Ascending aorta (tissue), 2 donors: ENCODE measurements at regions of chr9 and their contacts with region 1.

Region 1: DNA sequence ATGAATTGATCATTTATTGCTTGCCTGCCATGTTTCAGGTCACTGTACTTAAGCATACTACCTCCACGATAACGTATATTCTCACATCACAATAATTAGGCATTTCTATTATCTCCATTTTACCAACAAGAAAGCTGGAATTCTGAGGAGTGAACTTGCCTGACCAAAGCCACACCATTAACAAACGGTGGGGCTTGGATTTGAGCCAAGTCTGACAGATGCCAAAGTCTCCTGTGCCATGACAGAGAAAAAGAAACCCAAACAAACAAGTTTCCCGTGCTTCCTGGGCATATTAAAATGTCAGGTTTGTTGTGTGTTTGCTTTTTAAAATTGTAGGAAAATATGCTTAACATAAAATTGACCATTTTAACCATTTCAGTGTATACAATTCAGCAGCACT is 40.8 kb upstream of the KCNV2 start:
- DNase-seq: no peak
- H3K4me3 ChIP-seq: no peak overlapping the region
- H3K27ac ChIP-seq: no peak overlapping the region
- H3K4me1 ChIP-seq: no peaks in the 10 kb centered on the region
- H3K27me3 ChIP-seq: no peaks in the 10 kb centered on the region
- CTCF ChIP-seq: no peak

Region 2: DNA sequence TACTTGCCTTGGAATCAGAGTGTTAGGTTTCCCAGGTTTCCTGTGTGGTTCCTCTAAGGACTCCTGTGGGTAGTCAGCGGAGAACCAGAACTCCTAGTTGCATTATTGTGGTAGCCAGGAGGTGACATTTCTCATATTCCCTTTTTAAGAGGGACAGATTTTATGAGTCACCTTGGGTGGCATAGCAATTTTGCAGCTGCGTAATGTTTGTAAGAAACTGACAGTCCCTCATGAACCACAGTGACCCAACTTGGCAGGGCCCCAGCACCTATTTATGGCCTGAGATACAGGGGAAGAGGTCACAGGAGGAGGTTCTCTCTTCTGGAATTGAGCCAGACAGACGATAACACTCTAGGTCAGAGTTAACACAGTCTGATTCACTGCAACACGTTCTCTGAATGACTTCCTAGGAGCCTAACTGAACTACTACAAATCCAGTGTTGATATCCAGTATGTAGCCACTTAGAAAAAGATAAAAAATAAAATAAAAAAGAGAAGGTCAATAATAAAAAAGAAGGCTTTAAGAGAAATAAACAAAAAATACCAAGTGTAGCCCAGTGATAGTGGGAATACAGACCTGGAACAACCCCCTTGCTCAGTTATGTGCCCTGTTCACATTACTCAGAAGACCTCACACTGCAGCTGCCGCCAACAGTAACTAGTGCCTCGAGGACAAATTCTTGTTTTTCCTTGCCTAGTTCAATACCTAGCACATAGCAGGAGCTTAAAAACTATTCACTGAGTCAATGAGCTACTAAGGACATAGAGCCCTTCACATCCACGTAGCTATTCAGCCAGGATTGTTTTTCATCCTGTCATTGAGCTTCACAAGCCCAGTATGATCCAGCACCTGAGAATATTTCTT is 105.6 kb before region 1 on chr9:
- intact Hi-C with region 1: no loop called
- DNase-seq: peak; percentile 37 to 89
- H3K4me3 ChIP-seq: no peak overlapping the region
- H3K27ac ChIP-seq: peak overlapping the region; percentile 36 to 51
- H3K4me1 ChIP-seq: peaks cover 0 to 7% of the 10 kb centered on the region in 2 donors
- H3K27me3 ChIP-seq: no peaks in the 10 kb centered on the region
- CTCF ChIP-seq: no peak

Region 3: DNA sequence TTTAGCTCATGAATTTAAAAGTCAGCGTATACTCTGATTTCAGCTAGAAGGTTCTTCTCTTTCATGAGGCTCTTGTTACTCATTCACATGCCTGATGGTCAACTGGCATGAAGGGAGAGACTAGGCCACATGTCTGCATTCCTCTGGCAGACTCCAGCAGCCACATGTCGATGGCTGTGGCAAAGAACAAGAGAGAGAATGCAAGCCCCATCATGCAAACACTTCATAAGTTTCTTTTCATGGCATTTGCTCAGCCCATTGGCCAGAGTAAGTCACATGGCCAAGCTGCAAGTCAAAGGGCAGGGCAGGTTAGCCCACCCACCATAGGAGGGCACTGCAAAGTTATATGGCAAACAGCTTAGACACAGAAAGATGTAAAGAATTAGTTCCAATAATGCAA is 46.2 kb after region 1 on chr9:
- intact Hi-C with region 1: loop called (anchors 5 kb)
- DNase-seq: no peak
- H3K4me3 ChIP-seq: no peak overlapping the region
- H3K27ac ChIP-seq: no peak overlapping the region
- H3K4me1 ChIP-seq: peaks cover 0 to 5% of the 10 kb centered on the region in 2 donors
- H3K27me3 ChIP-seq: no peaks in the 10 kb centered on the region
- CTCF ChIP-seq: no peak

Region 4: DNA sequence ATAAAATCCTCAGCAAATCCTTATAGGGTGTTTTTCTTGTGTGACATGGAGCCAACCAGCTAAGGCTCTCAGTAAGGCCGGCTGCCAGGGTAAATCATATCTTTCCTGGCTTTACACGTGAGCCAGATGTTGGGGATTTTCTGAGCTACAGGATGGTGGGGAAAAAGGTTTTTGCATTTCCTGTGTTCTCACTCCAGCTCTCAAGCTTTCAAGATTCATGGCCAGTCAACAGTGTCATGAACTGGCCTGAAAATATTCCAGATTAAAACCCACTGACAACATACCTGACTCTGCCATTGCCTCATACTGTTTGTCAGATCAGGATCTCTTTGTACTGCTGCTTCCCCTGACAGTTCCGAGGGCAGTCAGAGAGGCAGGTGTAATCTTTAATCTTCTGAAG is 1316.5 kb after region 1 on chr9:
- intact Hi-C with region 1: no loop called
- DNase-seq: no peak
- H3K4me3 ChIP-seq: no peak overlapping the region
- H3K27ac ChIP-seq: peak overlapping the region in 1 of 2 donors; percentile 52
- H3K4me1 ChIP-seq: peaks cover 0 to 3% of the 10 kb centered on the region in 2 donors
- H3K27me3 ChIP-seq: no peaks in the 10 kb centered on the region
- CTCF ChIP-seq: no peak